Activated naive CD4-positive, alpha-beta T cell treated with anti-CD3 and anti-CD28 coated beads for 36 hours (primary cell): ENCODE measurements at regions of chr18 and their contacts with region 1.

Region 1: DNA sequence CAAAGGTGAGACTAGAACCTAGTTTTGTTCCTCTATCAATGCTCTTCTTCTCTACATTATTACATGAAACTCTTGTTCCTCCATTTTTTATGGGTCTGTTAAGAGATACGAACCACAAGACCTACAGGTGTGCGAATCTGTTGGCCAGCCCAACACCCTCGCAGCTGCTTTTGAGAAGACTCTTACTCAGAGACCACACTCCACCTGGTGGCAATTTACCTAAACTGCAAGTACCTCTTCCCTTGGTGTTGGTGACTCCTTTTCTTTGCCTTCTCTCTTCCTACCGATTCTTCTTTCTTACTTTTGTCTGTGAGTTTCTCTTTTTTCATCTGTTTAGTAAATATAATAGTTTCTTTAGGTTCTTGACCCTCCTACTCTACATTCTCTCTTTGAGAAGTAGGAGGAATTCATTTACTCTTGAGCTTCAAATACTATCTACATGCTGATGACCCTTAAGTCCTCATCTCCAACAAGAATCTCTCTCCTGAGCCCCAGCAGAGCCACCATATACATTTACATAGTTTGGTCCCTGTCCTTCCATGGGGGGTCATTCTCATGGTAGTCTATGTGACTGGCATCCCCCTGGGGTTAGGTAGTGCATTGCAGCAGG is 81.8 kb upstream of the GAREM1 start:
- DNase-seq: peak; percentile 75
- H3K4me3 Mint-ChIP-seq: no peak overlapping the region
- H3K27ac Mint-ChIP-seq: no peak overlapping the region
- H3K4me1 Mint-ChIP-seq: no peaks in the 10 kb centered on the region
- H3K27me3 Mint-ChIP-seq: peaks cover 2% of the 10 kb centered on the region

Region 2: GRCh38 chr18:31741097-31741735 is 811.3 kb before region 1 on chr18:
- CTCF ChIA-PET with region 1: interaction called, 3 read pairs
- intact Hi-C with region 1: loop called (anchors 1 kb)
- DNase-seq: peak; percentile 78
- H3K4me3 Mint-ChIP-seq: no peak overlapping the region
- H3K27ac Mint-ChIP-seq: no peak overlapping the region
- H3K4me1 Mint-ChIP-seq: no peaks in the 10 kb centered on the region
- H3K27me3 Mint-ChIP-seq: no peaks in the 10 kb centered on the region

Region 3: GRCh38 chr18:32271672-32272208 is 280.8 kb before region 1 on chr18:
- CTCF ChIA-PET with region 1: interaction called, 27 read pairs
- intact Hi-C with region 1: loop called (anchors 1 kb)
- DNase-seq: peak; percentile 44
- H3K4me3 Mint-ChIP-seq: no peak overlapping the region
- H3K27ac Mint-ChIP-seq: no peak overlapping the region
- H3K4me1 Mint-ChIP-seq: no peaks in the 10 kb centered on the region
- H3K27me3 Mint-ChIP-seq: peaks cover 11% of the 10 kb centered on the region

Region 4: GRCh38 chr18:32333781-32334180 is 218.7 kb before region 1 on chr18:
- CTCF ChIA-PET with region 1: interaction called, 10 read pairs
- intact Hi-C with region 1: no loop called
- DNase-seq: no peak
- H3K4me3 Mint-ChIP-seq: no peak overlapping the region
- H3K27ac Mint-ChIP-seq: no peak overlapping the region
- H3K4me1 Mint-ChIP-seq: no peaks in the 10 kb centered on the region
- H3K27me3 Mint-ChIP-seq: peaks cover 9% of the 10 kb centered on the region

Region 5: DNA sequence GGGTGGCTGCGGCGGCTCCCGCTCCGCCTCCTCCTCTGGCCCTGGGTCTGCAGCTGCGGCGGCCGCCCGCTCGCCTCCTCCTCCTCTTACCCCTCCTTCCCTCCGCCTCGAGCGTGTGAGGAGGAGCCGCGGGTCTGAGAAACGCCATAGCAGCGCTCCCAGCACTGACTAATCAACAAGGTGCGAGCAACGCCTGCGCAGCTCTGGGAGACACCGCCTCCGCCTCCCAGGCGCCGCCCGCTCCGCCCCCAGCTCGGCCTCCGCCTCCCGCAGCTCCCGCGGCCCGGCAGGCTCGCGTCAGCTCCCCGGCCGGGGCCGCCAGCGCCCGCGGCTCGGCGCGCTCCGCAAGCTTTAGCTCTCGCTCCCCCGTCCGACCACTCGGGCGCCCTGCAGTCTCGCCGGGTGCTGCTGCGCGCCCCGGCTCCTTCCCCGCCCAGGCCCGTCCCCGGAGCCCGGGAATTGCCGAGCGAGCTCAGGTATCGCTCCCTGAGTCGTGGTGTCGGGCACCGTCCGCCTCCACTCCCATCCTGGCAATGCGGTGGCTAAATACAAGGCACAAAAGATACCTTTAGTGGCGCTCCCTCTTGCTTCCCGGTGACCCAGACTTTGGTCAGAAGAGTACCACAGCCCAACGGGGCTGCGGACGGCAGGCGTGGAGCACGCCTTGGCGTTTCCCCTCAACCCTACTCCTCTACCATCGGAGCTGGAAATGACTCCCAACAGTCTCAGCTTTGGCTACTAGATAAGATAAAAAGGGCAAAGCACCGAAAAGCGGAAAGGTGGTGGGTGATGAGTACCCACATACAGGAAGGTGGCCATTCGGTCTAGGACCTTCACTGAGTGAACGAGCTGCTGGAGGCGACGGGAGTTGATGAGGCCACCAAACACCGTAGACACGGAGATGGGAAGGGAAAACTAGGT is 81.6 kb before region 1 on chr18 and contains the start of gene GAREM1:
- CTCF ChIA-PET with region 1: interaction called, 10 read pairs
- intact Hi-C with region 1: loop called (anchors 1 kb)
- DNase-seq: peak; percentile 91
- H3K4me3 Mint-ChIP-seq: peak within 1 kb of the TSS; percentile 77
- H3K27ac Mint-ChIP-seq: no peak within 1 kb of the TSS
- H3K4me1 Mint-ChIP-seq: peaks cover 28% of the 10 kb centered on the region
- H3K27me3 Mint-ChIP-seq: peaks cover 36% of the 10 kb centered on the region
- total RNA-seq, gene GAREM1: 0.31 to 0.35 TPM

Region 6: DNA sequence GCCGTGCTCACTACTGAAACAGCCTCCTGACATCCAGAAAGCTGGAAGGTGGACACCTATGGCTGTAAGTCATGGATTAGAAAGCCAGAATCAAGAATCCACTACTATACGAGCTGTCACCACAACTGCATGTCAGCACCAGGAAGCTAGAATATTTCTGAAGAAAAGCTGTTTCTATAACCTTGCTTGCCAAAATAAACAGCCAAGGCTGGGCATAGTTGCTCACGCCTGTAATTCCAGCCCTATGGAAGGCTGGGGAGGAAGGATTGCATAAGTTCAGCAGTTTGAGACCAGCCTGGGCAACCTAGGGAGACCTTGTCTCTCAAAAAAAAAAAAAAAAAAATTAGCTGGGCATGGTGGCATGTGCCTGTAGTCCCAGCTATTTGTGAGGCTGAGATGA is 14.4 kb after region 1 on chr18:
- CTCF ChIA-PET with region 1: interaction called, 16 read pairs
- intact Hi-C with region 1: no loop called
- DNase-seq: no peak
- H3K4me3 Mint-ChIP-seq: no peak overlapping the region
- H3K27ac Mint-ChIP-seq: no peak overlapping the region
- H3K4me1 Mint-ChIP-seq: no peaks in the 10 kb centered on the region
- H3K27me3 Mint-ChIP-seq: peaks cover 8% of the 10 kb centered on the region